Aorta (tissue), 5 donors: ENCODE measurements at regions of chr14 and their contacts with region 1.

Region 1: DNA sequence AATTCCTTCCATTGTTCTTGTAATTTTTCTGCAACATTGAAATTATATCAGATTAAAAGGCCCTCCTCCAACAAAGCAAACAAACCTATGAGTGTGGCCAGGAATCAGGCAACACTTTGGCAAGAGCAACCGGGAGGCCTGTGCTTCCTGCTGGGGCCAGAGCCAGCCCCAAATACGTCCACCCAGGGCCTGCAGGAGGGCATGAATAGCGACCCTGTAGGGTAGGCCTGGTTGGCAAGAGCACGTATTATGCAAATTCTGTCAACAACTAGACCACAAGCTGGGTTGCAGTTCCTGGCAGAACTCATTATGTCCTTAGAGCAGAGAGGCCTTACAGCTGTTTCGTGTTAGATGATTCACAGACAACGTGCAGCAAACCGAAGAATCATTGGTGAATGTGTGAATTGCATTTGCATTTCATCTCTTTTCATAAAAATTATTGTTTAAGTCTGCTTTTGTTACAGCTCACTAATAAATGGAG is 26.9 kb upstream of the LGALS3 start:
- DNase-seq: peak; percentile 80 to 83
- ATAC-seq: peak; percentile 89
- H3K4me3 ChIP-seq: no peak overlapping the region
- H3K27ac ChIP-seq: peak overlapping the region in 1 of 2 donors; percentile 83
- H3K4me1 ChIP-seq: peaks cover 0 to 3% of the 10 kb centered on the region in 2 donors
- H3K27me3 ChIP-seq: no peaks in the 10 kb centered on the region

Region 2: DNA sequence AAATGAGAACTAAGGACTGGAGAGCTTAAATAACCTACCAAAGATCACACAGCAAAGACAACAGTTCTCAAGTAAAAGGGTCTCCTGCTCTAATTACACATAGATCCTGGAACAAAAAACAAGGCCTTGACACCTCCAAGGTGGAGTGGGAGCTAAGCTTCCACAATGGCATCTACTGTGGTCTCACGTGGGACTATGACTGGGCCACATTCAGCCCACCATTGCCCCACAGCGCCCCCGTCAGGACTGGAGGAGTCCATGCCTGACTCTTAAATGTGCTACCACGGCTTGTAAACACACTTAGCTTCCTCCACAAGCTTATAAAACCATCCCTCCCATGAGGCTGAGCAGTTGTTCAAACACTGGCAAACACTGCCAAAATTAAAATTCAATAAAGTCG is 288.1 kb before region 1 on chr14:
- intact Hi-C with region 1: no loop called
- DNase-seq: no peak
- ATAC-seq: no peak
- H3K4me3 ChIP-seq: no peak overlapping the region
- H3K27ac ChIP-seq: no peak overlapping the region
- H3K4me1 ChIP-seq: no peaks in the 10 kb centered on the region
- H3K27me3 ChIP-seq: no peaks in the 10 kb centered on the region

Region 3: DNA sequence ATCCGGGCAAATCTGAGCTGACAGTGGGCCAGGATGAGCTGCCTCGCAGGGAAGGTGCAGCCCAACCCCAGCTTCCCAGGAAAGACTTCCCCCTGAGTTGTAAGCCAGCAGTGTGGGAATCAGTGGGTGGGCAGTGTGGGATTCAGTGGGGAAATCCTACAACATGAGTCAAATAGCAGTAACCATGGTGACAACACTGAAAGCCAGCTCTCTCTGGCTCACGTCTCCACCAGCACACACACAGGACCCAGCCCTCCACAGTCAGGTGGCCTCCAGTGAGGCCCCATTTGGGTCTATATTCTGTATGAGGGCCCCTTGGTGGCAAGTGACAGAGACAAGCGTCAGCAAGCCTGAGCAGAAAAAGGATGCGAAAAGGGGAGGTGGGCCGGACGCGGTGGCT is 20.9 kb after region 1 on chr14:
- intact Hi-C with region 1: no loop called
- DNase-seq: no peak
- ATAC-seq: no peak
- H3K4me3 ChIP-seq: no peak overlapping the region
- H3K27ac ChIP-seq: no peak overlapping the region
- H3K4me1 ChIP-seq: no peaks in the 10 kb centered on the region
- H3K27me3 ChIP-seq: no peaks in the 10 kb centered on the region

Region 4: DNA sequence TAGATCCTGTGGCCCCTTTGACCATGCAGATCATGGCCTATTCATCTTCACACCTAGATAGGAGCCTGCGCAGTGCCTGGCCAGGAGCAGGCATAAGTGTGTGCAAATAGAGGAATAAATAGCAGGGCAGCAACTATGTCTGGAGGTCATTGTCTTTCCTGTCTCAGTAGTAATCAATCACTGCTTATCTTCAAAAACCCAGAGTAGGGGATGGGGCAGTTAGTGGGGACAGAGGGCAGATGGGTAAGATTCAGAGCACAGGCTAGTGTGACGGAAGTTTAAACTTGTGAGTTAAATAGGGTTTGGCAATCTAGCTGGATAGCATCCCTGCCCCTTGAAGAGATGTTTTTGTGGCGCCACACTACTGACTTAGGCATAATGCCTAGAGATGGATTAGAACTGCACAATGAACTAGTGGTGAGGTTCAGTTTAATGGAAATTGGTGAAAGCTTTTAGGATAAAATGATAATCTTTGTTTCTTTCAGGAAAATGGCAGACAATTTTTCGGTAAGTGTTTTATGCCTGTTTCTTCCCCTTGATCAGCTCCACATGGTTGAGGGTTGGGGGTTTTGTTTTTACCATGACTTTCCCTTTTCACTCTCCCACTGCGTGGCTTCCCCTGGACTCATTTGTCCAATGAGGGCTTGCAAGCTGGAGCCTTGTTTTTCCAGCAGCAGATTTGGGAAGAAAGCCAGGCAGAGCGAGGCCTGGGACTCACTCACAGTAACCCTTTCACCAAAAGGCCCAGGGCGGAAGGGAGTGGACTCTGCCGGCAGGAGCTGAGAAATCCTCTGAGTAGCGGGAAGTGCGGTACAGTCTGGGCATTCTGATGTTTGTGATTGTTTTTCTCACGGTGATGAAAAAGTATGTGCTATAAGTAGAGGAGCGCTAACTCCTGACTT is 35.0 kb after region 1 on chr14:
- intact Hi-C with region 1: loop called in 1 of 2 experiments (anchors 5 kb)
- DNase-seq: peak; percentile 87 to 88
- ATAC-seq: peak; percentile 86
- H3K4me3 ChIP-seq: peak overlapping the region in 1 of 2 donors; percentile 6
- H3K27ac ChIP-seq: peak overlapping the region; percentile 77 to 80
- H3K4me1 ChIP-seq: peaks cover 0 to 6% of the 10 kb centered on the region in 2 donors
- H3K27me3 ChIP-seq: no peaks in the 10 kb centered on the region